ENCODE measurements at regions of chr2 and their contacts with region 1.

Region 1: DNA sequence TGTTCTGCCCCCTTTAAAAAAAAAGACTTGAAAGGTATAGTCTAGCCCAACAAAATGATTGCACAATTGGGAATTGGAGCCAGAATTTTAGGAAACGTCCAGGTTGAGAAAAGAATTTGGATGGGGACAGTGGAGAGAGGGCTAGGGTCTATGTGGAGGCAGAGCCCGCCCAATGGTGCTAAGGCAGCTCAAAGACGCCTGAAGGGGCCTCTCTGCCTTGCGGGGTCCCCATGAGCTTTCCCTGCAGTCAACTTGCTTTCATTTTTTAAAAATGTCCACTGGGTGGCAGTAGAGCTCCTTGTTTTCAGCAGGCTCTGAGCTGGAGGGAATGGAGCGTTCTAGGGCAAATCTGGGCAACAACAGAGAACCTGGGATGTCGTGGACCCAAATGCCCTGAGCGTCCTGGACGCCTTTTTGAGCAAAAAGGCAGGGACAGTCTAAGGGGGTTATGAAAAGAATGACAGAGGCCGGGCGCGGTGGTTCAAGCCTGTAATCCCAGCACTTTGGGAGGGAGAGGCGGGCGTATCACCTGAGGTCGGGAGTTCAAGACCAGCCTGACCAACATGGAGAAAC is 40.2 kb upstream of the ITM2C start:
- DNase-seq: no peak
- ATAC-seq: peak; percentile 92

Region 2: DNA sequence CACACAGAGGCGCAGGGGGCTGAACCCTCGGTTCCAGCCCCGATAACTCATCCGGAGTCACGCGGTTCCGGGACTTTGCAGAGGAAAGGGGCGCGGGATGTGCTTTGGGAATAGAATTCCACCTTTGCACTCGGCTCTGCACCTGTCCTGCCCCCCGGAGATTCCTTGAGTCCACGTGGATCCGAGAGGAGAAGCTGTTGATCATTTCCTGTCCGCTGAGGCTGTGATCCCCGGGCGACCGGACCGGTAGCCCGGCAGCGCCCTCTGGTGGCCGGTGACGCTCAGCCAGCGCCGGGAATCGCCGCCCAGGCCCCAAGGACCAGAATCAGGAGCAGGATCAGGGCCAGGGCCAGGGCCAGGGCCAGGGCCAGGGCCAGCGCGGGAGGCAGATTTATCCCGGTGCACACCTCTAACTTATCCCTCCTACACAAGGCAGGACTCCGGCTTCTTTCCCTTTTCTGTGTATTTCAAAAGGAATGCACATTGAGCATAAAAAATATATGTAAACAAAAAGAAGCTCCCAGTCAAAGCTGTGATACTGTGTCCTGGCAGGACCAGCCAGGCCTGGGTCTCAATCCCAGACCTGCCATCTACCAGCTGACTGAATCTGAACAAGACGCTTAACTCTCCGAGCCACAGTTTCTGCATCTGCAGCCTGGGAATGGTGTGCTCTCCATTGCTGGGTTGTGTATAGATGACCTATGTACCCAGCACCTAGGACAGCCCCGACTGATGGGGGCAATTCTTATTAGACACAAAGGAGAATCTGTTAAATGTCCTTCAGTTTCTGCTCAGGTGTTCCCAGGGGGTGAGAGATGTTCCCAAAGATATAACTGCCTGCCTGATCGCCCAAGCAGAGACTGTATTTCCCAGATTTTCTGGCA is 162.9 kb after region 1 on chr2:
- intact Hi-C with region 1: loop called (anchors 5 kb)
- DNase-seq: peak; percentile 91
- ATAC-seq: peak; percentile 86

Measured in sciatic nerve (tissue), 2 donors.